Naive thymus-derived CD4-positive, alpha-beta T cell (primary cell): ENCODE measurements at regions of chr19 and their contacts with region 1.

Region 1: DNA sequence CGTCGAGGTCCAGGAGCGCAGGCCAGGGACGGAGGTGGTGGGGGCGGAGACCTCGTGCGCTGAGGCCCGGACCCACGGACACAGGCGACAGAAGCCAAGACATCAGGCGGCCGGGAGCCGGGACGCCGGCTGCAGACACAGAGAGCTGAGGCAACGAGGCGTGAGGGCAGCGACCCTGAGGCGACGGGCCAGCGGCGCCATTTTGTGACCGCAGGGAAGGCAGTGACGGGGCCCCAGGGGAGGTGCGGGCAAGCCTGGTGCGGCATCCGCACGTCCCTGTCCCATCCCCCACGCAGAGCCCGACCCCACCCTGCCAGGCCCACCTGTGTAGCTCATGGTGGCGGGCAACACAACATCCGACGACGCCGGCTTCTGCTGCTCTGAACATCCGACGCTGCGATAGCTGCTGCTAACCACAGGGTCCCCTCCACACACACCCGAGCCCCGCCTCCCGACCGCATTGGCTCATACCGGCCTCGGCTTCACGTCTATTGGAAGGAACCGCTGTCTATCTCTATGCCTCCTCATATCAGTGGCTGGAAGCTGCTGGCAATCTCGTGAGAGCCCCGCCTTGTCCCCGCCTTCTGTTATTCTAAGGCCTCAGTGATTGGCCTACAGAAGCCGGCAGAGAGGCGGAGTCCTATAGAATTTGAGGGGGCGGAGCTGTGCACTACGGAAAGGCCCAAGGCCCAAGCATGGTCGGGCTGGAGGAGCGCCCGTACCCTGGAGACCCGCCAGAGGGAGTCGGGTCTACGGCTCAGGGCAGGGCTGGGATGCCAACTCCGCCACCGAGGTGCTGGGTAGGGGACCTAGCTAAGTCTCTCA is at the start of gene AKAP8L:
- DNase-seq: peak; percentile 90 to 100 (median 99)
- ATAC-seq: peak; percentile 95
- H3K4me3 ChIP-seq: peak within 1 kb of the TSS; percentile 71
- H3K4me3 Mint-ChIP-seq: peak within 1 kb of the TSS; percentile 92 to 100 (median 99)
- H3K27ac ChIP-seq: peak within 1 kb of the TSS; percentile 88
- H3K27ac Mint-ChIP-seq: peak within 1 kb of the TSS; percentile 94 to 99 (median 97)
- H3K4me1 ChIP-seq: peaks cover 23 to 25% of the 10 kb centered on the region in 2 donors
- H3K4me1 Mint-ChIP-seq: peaks cover 31 to 53% (median 42%) of the 10 kb centered on the region in 7 donors
- H3K27me3 ChIP-seq: no peaks in the 10 kb centered on the region
- H3K27me3 Mint-ChIP-seq: no peaks in the 10 kb centered on the region
- total RNA-seq, gene AKAP8L: 81.2 to 208 (median 146) TPM

Region 2: DNA sequence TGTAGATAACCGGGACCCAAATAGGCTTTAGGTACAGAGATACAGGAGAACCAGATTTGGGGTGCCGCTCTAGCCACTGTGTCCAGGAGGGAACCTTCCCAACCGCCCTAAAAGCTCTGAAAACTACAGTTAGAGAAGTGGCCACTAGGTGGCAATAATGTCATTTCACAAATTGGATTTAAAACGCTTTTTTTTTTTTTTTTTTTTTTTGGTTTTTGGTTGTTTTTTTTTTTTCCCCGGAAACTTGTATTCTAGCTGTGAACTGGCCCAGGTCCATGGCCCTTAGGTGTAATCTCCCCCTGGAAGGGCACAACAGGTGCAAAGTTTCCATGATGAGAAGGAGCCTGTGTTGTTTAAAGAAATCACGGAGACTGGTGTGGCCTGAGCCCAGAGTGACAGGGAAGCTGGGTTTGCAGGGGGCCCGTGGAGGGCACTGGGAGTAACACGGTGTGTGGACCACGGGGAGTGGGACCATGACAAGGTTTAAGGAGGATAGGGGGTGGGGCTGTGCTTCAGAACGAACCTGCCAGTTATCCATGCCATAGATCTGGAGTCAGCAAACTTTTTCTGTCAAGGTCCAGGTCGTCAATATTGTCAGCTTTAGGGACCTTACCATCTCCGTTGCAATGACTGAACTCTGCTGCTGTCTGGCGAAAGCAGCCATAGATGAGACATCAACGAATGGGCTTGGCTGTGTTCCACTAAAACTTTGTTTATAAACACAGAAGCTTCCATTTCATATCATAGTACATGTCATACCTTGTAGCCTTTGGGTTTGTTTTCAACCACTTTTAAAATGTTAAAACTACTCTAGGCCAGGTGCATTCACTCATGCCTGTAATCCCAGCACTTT is 326.7 kb before region 1 on chr19:
- CTCF ChIA-PET with region 1: interaction called, 6 read pairs
- POLR2A ChIA-PET with region 1: interaction called, 3 read pairs
- intact Hi-C with region 1: loop called in 1 of 2 experiments (anchors 1 kb)
- DNase-seq: peak in 7 of 9 donors; percentile 45 to 72 (median 67)
- ATAC-seq: peak; percentile 84
- H3K4me3 ChIP-seq: no peak overlapping the region
- H3K4me3 Mint-ChIP-seq: no peak overlapping the region
- H3K27ac ChIP-seq: no peak overlapping the region
- H3K27ac Mint-ChIP-seq: peak overlapping the region in 3 of 9 donors; percentile 32 to 72 (median 53)
- H3K4me1 ChIP-seq: peaks cover 4 to 6% of the 10 kb centered on the region in 2 donors
- H3K4me1 Mint-ChIP-seq: peaks cover 0 to 9% (median 4%) of the 10 kb centered on the region in 7 donors
- H3K27me3 ChIP-seq: no peaks in the 10 kb centered on the region
- H3K27me3 Mint-ChIP-seq: peaks cover 0 to 18% (median 9%) of the 10 kb centered on the region in 5 donors

Region 3: DNA sequence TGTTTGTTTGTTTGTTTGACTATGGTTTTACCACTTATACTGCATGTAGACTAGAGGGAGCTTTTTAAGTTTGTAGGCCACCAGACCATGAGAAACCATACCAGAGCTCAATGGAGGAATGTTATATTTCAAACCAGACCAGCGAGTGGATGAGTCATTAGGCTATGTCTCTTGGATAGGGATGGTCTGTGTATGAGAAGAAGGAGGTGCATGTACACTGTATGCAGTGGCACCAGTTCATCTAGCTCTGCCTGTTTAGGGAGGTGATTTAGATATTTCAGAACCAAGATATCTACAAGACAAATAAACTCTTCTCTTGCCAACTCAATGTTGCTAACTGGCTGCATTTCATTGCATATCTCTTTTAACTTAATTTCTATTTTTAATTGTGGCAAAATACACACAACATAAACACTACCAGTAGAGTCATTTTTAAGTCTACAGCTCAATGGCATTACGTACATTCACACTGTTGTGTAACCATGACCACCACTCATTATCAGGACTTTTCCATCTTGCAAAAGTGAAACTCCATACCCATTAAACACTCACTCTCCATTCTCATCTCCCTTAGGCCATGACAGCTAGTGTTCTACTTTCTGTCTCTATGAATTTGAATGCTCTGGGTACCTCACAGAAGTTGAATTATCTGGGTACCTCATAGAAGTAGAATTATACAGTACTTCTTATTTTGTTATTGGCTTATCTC is 282.4 kb before region 1 on chr19:
- CTCF ChIA-PET with region 1: no interaction called
- POLR2A ChIA-PET with region 1: no interaction called
- intact Hi-C with region 1: no loop called
- DNase-seq: no peak
- ATAC-seq: no peak
- H3K4me3 ChIP-seq: no peak overlapping the region
- H3K4me3 Mint-ChIP-seq: no peak overlapping the region
- H3K27ac ChIP-seq: no peak overlapping the region
- H3K27ac Mint-ChIP-seq: no peak overlapping the region
- H3K4me1 ChIP-seq: no peaks in the 10 kb centered on the region
- H3K4me1 Mint-ChIP-seq: peaks cover 0 to 13% (median 0%) of the 10 kb centered on the region in 7 donors
- H3K27me3 ChIP-seq: no peaks in the 10 kb centered on the region
- H3K27me3 Mint-ChIP-seq: peaks cover 0 to 3% (median 0%) of the 10 kb centered on the region in 5 donors

Region 4: DNA sequence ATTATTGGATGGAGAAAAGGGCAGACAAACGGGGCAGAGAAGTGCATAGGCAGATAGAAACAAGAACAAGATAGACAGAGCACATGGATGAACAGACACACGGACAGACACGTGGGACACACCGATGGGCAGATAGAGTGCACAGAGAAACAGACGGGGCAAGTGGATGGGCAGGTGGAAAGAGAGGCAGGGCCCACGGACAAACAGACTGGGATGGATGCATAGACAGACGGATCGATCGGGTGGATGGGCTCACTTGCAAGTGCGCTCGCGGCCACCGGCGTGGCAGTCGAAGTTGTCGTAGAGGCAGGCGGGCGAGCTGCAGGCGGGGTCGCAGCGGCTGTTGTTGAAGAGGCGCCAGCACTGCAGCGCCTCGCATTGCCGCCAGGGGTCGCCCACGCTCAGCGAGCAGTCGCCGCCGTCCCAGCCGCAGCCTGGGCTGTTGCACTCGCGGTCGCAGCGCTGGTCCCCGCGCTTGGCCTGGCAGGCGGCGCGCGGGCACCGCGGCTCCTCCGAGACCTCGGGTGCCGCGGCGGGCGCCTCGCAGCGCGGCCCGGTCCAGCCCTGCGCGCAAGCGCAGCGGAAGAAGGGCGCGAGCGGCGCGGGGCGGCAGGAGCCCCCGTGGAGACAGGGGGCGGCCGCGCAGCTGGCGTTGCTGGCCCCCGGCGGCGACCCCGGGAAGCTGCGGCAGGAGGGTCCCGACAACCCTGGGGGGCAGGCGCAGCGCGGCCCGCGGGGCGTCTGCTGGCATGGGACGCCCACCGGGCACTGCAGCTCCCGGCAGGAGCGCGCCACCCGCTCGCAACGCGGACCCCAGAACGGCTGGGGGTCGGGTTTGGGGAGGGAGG is 241.3 kb before region 1 on chr19:
- CTCF ChIA-PET with region 1: interaction called, 8 read pairs
- POLR2A ChIA-PET with region 1: interaction called, 3 read pairs
- intact Hi-C with region 1: loop called (anchors 1 to 2 kb)
- DNase-seq: peak; percentile 66 to 88 (median 82)
- ATAC-seq: peak; percentile 99
- H3K4me3 ChIP-seq: no peak overlapping the region
- H3K4me3 Mint-ChIP-seq: peak overlapping the region; percentile 29 to 84 (median 53)
- H3K27ac ChIP-seq: no peak overlapping the region
- H3K27ac Mint-ChIP-seq: peak overlapping the region in 1 of 9 donors; percentile 47
- H3K4me1 ChIP-seq: peaks cover 0 to 5% of the 10 kb centered on the region in 2 donors
- H3K4me1 Mint-ChIP-seq: peaks cover 4 to 8% (median 5%) of the 10 kb centered on the region in 7 donors
- H3K27me3 ChIP-seq: no peaks in the 10 kb centered on the region
- H3K27me3 Mint-ChIP-seq: peaks cover 0 to 20% (median 9%) of the 10 kb centered on the region in 5 donors

Region 5: GRCh38 chr19:15332311-15332996 is 86.3 kb before region 1 on chr19 and contains the start of gene BRD4:
- CTCF ChIA-PET with region 1: interaction called, 3 read pairs
- POLR2A ChIA-PET with region 1: interaction called, 5 read pairs
- intact Hi-C with region 1: loop called in 1 of 2 experiments (anchors 2 kb)
- DNase-seq: peak; percentile 67 to 90 (median 81)
- ATAC-seq: peak; percentile 82
- H3K4me3 ChIP-seq: peak within 1 kb of the TSS; percentile 91
- H3K4me3 Mint-ChIP-seq: peak within 1 kb of the TSS; percentile 93 to 99 (median 96)
- H3K27ac ChIP-seq: peak within 1 kb of the TSS; percentile 91
- H3K27ac Mint-ChIP-seq: peak within 1 kb of the TSS; percentile 85 to 96 (median 94)
- H3K4me1 ChIP-seq: peaks cover 28 to 29% of the 10 kb centered on the region in 2 donors
- H3K4me1 Mint-ChIP-seq: peaks cover 32 to 52% (median 47%) of the 10 kb centered on the region in 7 donors
- H3K27me3 ChIP-seq: no peaks in the 10 kb centered on the region
- H3K27me3 Mint-ChIP-seq: no peaks in the 10 kb centered on the region
- total RNA-seq, gene BRD4: 104 to 168 (median 128) TPM

Region 6: DNA sequence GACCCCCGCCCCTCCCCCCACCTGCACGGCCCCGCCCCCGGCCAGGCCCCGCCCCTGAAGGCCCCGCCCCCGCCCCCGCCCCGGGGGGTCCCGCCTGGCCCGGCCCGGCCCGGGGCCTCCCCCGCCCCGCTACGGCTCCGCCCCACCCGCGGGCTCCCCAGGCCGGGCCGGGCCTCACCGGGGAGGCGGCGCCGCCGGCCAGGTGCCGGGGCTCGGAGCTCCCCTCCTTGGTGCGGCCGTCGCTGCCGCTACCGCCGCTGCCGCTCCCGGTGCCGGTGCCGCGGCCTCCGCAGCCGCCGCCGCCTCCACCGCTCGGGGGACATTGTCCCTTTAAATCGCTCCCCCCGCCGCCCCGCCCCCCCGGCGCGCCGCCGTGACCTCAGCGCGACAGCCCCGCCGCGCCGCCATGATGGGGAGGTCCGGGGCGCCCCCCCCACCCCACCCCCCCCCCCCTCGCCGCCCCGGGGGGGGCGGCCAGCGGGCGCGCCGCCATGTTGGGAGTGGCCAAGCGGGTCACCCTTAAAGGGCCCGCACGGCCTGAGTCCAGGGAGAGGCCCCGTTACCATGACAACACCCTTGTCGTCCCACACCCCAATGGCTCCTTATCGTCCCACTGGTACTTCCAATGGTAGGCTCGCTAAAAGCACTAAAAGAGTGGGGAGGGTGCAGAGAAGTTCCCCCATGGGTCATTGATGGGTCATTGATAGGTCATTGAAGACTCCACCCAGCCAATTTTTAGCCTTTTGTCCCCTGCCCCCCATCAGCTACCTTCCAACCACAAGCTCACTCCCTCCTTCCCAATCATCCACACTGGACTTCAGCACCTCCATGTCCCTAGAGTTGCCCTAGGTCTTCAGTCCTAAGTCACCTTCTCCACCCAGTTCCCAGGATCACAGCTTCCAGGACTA is 31.1 kb after region 1 on chr19 and contains the start of gene WIZ:
- CTCF ChIA-PET with region 1: interaction called, 6 read pairs
- POLR2A ChIA-PET with region 1: interaction called, 10 read pairs
- intact Hi-C with region 1: loop called (anchors 1 kb)
- DNase-seq: peak; percentile 74 to 92 (median 86)
- ATAC-seq: peak; percentile 93
- H3K4me3 ChIP-seq: peak within 1 kb of the TSS; percentile 35
- H3K4me3 Mint-ChIP-seq: peak within 1 kb of the TSS; percentile 62 to 86 (median 82)
- H3K27ac ChIP-seq: peak within 1 kb of the TSS; percentile 72
- H3K27ac Mint-ChIP-seq: peak within 1 kb of the TSS; percentile 80 to 96 (median 91)
- H3K4me1 ChIP-seq: peaks cover 0 to 5% of the 10 kb centered on the region in 2 donors
- H3K4me1 Mint-ChIP-seq: peaks cover 5 to 32% (median 30%) of the 10 kb centered on the region in 7 donors
- H3K27me3 ChIP-seq: no peaks in the 10 kb centered on the region
- H3K27me3 Mint-ChIP-seq: no peaks in the 10 kb centered on the region
- total RNA-seq, gene WIZ: 20.1 to 34.9 (median 24.8) TPM

Region 7: DNA sequence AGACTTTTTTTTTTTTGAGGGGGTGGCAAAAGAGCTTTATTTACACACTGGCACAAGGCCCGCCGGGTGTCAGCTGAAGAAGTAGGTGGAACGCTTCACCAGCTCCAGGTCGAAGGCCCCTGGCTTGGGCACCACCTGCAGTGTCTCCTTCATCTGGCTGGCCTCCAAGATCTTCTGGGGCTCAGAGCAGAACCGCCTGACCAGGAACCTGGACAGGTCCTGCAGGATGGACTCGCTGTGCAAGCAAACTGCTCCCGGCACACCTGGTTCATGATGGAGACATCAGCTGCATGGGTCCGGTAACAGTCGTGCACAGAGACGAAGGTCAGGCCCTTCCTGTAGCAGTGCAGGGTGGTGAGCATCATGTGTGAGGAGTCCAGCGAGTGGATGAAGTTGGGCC is 483.5 kb after region 1 on chr19:
- CTCF ChIA-PET with region 1: no interaction called
- POLR2A ChIA-PET with region 1: no interaction called
- intact Hi-C with region 1: no loop called
- DNase-seq: no peak
- ATAC-seq: no peak
- H3K4me3 ChIP-seq: no peak overlapping the region
- H3K4me3 Mint-ChIP-seq: no peak overlapping the region
- H3K27ac ChIP-seq: no peak overlapping the region
- H3K27ac Mint-ChIP-seq: no peak overlapping the region
- H3K4me1 ChIP-seq: no peaks in the 10 kb centered on the region
- H3K4me1 Mint-ChIP-seq: peaks cover 0 to 12% (median 6%) of the 10 kb centered on the region in 7 donors
- H3K27me3 ChIP-seq: no peaks in the 10 kb centered on the region
- H3K27me3 Mint-ChIP-seq: peaks cover 34 to 60% (median 53%) of the 10 kb centered on the region in 5 donors